ENCODE measurements at regions of chr18 and their contacts with region 1.

Region 1: DNA sequence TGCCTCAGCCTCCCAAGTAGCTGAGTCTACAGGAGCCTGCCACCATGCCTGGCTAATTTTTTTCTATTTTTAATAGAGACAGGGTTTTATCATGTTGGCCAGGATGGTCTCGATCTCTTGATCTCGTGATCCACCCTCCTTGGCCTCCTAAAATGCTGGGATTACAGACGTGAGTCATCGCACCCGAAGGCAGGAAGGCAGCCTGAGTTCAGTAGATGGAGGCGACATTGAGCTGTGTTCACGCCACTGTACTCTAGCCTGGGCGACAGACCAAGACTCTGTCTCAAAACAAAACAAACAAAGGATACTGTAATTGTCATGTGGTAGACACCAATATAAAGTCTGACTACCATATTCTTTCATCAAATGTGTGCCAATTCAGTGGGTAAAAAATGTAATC is 500.9 kb upstream of the DSEL start:
- DNase-seq: no peak
- ATAC-seq: no peak
- H3K4me3 ChIP-seq: no peak overlapping the region
- H3K27ac ChIP-seq: no peak overlapping the region
- H3K4me1 ChIP-seq: no peaks in the 10 kb centered on the region
- H3K27me3 ChIP-seq: no peaks in the 10 kb centered on the region
- CTCF ChIP-seq: no peak

Region 2: GRCh38 chr18:68035774-68036522 is 18.6 kb after region 1 on chr18:
- CTCF ChIA-PET with region 1: no interaction called
- POLR2A ChIA-PET with region 1: no interaction called
- intact Hi-C with region 1: loop called (anchors 2 kb)
- DNase-seq: no peak
- ATAC-seq: no peak
- H3K4me3 ChIP-seq: no peak overlapping the region
- H3K27ac ChIP-seq: no peak overlapping the region
- H3K4me1 ChIP-seq: no peaks in the 10 kb centered on the region
- H3K27me3 ChIP-seq: no peaks in the 10 kb centered on the region
- CTCF ChIP-seq: no peak

Measured in PC-3 (cell line).